ENCODE measurements at regions of chr16 and their contacts with region 1.

Region 1: DNA sequence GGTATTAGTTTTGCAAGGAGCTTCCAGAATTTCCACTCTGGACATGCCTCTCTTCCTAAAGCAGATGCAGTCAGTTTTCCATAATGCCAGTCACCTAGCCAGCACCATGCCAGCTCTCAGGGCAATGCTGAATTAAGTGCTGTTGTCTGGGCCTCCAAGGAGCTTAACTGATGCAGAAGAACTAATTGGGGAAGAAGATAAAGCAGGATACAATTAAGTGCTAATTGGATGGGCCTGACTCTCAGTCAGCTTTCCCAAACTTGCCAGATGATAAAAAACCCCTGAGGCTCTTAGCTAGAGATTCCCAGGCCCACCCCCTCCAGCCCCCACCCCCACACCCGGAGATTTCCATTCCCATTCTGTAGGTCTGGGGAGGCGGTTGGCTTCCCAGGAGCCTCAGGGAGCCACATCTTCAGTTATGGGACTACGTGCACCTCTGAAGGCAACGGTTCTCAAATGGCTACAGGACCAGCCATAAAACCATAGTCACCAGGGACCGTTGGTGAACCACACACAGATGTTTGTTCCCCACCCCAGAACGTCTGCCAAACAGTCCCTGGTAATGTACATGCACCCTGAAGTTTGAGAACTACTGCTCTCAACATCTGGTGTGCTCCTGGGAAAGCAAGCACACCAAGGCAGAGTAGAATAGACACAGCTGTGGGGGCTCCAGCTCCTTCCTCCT is 499.1 kb upstream of the CDH5 start:
- ATAC-seq: peak in 1 of 8 experiments; percentile 31
- H3K4me3 ChIP-seq: no peak overlapping the region
- H3K27ac ChIP-seq: no peak overlapping the region
- H3K4me1 ChIP-seq: peaks cover 0 to 2% of the 10 kb centered on the region in 2 donors

Region 2: DNA sequence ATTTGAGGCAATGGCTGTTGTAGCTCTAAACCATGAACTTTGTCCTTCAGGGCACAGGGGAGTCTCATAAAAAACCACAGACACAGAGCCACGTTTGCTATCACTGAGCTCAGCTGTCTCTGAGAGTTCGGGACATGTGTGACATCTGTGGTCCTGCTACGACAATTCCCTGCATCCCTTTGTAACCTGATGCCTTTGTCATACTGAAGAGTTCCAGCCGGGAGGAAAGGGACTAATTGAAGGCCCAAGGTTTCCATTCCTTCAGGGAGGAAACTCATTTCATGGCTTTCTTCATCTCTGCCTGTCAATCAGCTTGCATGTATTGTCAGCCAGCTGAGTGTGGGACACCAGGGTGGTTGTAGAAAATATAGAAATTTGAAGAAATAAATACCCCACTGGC is 100.3 kb before region 1 on chr16:
- in situ Hi-C with region 1: no loop called
- ATAC-seq: peak in 3 of 8 experiments; percentile 17 to 43 (median 32)
- H3K4me3 ChIP-seq: no peak overlapping the region
- H3K27ac ChIP-seq: no peak overlapping the region
- H3K4me1 ChIP-seq: peaks cover 5 to 6% of the 10 kb centered on the region in 2 donors

Region 3: GRCh38 chr16:65922923-65923322 is 55.5 kb after region 1 on chr16:
- in situ Hi-C with region 1: no loop called
- ATAC-seq: no peak
- H3K4me3 ChIP-seq: no peak overlapping the region
- H3K27ac ChIP-seq: no peak overlapping the region
- H3K4me1 ChIP-seq: peaks cover 11 to 38% of the 10 kb centered on the region in 2 donors

Region 4: DNA sequence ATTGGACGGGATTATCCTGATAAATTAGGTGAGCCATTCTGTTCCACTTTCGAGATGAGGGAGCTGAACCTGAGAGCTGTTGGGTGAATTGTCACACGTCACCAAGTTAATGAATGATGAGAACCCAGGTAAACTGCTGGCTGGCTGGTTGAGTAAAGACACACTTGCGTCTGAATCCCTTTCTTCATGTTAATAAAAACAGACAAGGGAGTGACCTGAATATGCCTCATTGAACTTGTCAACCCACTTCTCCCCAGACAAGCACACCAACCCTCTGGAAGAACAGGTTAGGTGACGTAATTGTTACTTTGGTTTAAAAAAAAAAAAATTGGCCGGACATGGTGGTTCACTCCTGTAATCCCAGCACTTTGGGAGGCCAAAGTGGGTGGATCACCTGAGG is 98.2 kb after region 1 on chr16:
- in situ Hi-C with region 1: loop called in 1 of 9 experiments (anchors 25 kb)
- ATAC-seq: no peak
- H3K4me3 ChIP-seq: no peak overlapping the region
- H3K27ac ChIP-seq: no peak overlapping the region
- H3K4me1 ChIP-seq: no peaks in the 10 kb centered on the region

Region 5: DNA sequence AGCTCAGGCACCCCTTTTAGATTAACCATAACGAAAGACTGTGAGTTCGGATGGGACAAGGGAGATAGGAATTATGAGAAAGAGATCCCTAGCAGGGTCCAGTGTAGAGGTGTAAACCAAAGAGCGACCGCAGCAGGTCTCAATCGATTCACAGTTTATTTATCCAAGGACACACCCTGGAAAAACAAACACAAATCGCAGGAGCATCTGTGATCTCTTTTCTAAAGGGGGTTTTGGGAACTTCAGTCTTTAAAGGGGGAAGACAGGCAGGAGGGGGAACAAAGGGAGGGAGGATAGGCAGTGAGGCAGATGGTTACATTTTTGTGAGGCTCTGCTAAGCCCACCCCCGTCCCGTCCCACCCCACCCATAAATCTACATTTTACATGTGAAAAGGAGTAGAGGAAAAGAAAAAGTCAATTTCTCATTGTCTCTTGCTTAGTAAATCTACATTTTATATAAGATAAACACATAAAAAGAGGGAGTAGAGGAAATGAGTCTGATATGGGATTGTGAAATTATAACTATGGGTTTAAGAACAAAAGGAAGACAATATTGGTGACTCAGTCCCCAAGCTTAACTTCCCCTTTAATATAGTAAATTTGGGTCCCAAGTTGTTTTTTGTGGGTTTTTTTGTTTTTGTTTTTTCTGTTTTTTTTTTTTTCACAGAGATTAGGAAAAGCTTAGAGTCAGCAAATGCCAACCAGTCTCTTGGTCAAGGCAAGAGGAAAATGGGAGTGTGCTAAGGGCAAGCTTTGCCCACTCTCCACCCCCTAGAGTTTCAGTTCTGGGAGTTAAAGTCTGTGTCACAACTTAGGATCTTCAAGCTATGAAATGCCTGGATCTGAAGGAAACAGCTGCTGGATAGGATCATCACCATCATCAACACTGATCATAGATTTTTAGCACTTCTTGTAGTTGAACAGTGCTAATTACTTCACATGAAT is 338.1 kb after region 1 on chr16:
- in situ Hi-C with region 1: no loop called
- ATAC-seq: peak in 3 of 8 experiments; percentile 17 to 85 (median 44)
- H3K4me3 ChIP-seq: no peak overlapping the region
- H3K27ac ChIP-seq: no peak overlapping the region
- H3K4me1 ChIP-seq: peaks cover 0 to 2% of the 10 kb centered on the region in 2 donors

Measured in motor neuron (in vitro differentiated cells).